ENCODE measurements at regions of chr16 and their contacts with region 1.

Region 1: GRCh38 chr16:24054741-24055491 is 201.2 kb upstream of the CACNG3 start:
- DNase-seq: no peak
- H3K4me3 ChIP-seq: no peak overlapping the region
- H3K27ac ChIP-seq: no peak overlapping the region
- H3K4me1 ChIP-seq: no peaks in the 10 kb centered on the region
- CTCF ChIP-seq: no peak

Region 2: DNA sequence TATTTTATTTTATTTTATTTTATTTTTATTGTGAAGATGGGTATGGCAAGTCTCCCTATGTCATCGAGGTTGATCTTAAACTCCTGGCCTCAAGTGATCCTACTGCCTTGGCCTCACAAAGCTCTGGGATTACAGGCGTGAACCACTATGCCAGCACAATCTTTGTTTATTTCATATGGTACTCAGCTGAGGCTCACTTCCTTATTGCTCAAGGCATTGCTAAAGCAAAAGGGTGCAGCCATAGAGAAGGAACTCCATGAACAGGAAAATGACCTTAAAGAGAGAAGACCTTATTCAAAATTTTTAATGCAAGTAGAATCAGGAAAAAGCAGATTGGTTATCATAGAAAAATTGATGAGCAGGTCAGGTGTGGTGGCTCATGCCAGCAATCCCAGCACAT is 373.8 kb after region 1 on chr16:
- CTCF ChIA-PET with region 1: no interaction called
- POLR2A ChIA-PET with region 1: no interaction called
- intact Hi-C with region 1: loop called (anchors 10 kb)
- DNase-seq: no peak
- H3K4me3 ChIP-seq: no peak overlapping the region
- H3K27ac ChIP-seq: no peak overlapping the region
- H3K4me1 ChIP-seq: no peaks in the 10 kb centered on the region
- CTCF ChIP-seq: no peak

Measured in OCI-LY7 (cell line).